Activated CD4-positive, alpha-beta memory T cell treated with anti-CD3 and anti-CD28 coated beads, Interleukin-2, amount 10 ng/mL, durations not matched to agents 7 days and 5 days (primary cell): ENCODE measurements at regions of chr2 and their contacts with region 1.

Region 1: DNA sequence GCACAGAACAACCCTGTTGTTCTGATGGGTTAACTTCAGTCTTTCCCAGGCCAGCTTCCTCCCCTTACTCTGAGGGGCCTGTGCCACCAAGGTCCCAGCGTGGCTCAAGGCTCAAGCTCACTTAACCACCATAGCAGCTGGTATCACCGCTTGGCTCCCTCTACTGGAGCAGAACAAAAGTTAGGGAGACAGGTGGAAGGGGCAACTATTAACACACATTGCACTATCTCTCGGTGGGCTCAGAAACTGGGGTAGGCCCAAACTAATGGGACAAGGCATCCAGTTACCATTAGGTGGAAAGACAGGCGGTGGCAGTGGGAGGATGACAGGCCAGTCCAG is 88.7 kb upstream of the ATL2 start:
- DNase-seq: no peak
- H3K4me3 Mint-ChIP-seq: no peak overlapping the region
- H3K27ac Mint-ChIP-seq: no peak overlapping the region
- H3K4me1 Mint-ChIP-seq: peaks cover 7% of the 10 kb centered on the region
- H3K27me3 Mint-ChIP-seq: peaks cover 3% of the 10 kb centered on the region

Region 2: DNA sequence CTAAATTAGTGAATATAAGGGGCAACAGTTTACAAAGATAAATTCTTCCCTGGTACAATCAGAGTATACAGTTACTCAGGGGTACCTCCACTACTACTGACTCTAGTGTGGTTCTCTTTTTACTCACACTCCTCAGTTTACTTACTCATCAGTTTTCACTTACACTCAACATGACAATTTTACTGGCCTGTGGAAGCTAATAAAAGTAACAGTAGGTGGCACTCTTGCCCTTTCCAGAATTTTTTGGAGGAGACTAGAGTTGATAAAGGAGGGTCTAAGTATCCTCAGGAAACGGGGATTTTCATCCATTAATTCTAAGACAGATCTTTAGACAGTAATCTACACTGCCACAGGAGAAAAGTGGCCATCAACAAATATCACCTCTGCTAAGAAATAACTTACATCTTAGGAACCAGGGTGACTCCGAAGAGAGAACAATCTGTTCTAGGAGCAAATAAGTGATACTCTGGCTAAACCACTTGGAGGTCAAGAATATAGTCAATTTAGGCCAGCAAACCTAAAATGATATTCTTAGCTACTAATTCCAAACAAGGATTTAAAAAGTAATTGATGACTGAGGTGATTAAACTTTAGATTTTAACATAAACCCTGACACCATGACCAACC is 149.9 kb before region 1 on chr2:
- CTCF ChIA-PET with region 1: interaction called, 29 read pairs
- POLR2A ChIA-PET with region 1: no interaction called
- DNase-seq: no peak
- H3K4me3 Mint-ChIP-seq: no peak overlapping the region
- H3K27ac Mint-ChIP-seq: no peak overlapping the region
- H3K4me1 Mint-ChIP-seq: peaks cover 6% of the 10 kb centered on the region
- H3K27me3 Mint-ChIP-seq: no peaks in the 10 kb centered on the region